Activated CD4-positive, alpha-beta T cell treated with anti-CD3 and anti-CD28 coated beads, Interleukin-2, amount 10 ng/mL, durations not matched to agents 24 days and 14 days (primary cell): ENCODE measurements at regions of chr22 and their contacts with region 1.

Region 1: GRCh38 chr22:19122143-19122751 is at the start of gene DGCR2:
- DNase-seq: peak; percentile 98
- H3K4me3 Mint-ChIP-seq: peak within 1 kb of the TSS; percentile 91
- H3K27ac Mint-ChIP-seq: peak within 1 kb of the TSS; percentile 65
- H3K4me1 Mint-ChIP-seq: peaks cover 39% of the 10 kb centered on the region
- H3K27me3 Mint-ChIP-seq: no peaks in the 10 kb centered on the region
- total RNA-seq, gene DGCR2: 23.8 and 25.5 TPM in 2 replicates

Region 2: DNA sequence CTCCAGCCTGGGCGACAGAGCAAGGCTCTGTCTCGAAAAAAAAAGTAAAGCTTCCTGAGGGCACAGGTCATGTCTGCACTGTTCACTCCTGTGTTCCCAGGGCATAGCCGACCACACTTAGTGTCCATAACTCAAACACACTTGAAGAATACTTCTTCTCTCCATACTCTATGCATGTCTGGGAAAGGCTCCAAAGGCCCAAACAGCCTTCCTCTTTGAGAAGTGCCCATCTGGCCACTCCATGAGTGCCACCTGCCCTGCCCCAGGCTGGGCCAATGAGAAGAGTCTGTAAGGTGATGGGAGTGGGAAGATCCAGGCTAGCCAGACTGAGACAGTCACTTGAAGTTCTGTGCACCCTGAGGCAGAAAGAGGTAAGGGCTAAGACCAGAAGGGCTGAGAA is 24.7 kb before region 1 on chr22:
- intact Hi-C with region 1: no loop called
- DNase-seq: no peak
- H3K4me3 Mint-ChIP-seq: no peak overlapping the region
- H3K27ac Mint-ChIP-seq: no peak overlapping the region
- H3K4me1 Mint-ChIP-seq: no peaks in the 10 kb centered on the region
- H3K27me3 Mint-ChIP-seq: no peaks in the 10 kb centered on the region

Region 3: DNA sequence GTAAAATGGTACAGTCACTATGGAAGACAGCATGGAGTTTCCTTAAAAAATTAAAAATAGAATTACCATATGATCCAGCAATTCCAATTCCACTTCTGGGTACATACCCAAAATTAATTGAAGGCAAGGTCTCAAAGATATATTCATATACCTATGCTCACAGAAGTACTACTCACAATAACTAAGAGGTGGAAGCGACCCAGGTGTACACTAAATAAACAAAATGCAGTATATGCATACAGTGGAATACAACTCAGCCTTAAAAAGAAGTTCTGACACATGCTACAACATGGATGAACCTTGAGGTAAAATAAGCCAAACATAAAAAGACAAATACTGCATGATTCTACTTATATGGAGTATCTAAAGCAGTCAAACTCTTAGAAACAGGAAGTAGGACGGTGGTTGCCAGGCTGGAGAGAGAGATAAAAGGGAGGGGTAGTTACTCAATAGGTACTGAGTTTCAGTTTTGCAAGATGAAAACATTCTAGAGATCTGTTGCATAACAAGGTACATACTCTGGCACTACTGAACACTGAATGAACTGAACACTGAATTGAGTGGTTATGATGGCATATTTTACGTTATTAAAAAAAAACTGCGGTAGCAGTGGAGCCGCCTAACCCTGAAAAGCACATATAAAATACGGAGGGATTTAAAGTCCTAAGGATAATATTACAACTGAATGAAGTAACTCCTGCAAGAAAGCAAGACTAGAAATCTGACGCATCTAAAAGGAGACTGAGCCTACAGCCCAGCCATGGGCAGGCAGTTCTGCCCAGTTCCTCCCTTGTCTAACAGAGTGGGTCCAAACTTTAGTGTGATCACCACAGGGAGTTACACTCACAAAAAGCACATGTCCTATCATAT is 12.8 kb before region 1 on chr22:
- intact Hi-C with region 1: loop called (anchors 2 kb)
- DNase-seq: peak; percentile 86
- H3K4me3 Mint-ChIP-seq: peak overlapping the region; percentile 59
- H3K27ac Mint-ChIP-seq: peak overlapping the region; percentile 23
- H3K4me1 Mint-ChIP-seq: peaks cover 45% of the 10 kb centered on the region
- H3K27me3 Mint-ChIP-seq: no peaks in the 10 kb centered on the region

Region 4: DNA sequence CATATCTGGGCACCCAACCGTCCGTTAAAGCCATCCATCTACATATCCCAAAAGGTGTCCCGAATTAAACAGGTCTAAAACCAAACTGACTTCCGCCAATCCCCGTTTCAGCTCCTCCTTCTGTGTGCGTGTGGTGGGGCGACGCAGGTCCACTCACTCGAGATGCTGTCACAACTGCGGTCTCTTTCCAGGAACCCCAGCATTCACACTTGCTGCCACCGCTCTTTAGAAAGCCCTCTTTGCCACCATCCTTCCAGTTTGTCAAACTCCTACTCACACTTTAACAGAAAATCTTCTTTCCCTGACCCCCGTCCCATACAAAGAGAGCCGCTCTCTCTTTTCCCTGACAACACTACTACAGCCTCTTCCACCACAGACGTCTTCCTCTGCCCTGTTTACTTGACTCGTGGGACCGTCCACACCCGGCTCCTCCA is 21.7 kb after region 1 on chr22:
- intact Hi-C with region 1: loop called (anchors 1 kb)
- DNase-seq: peak; percentile 85
- H3K4me3 Mint-ChIP-seq: peak overlapping the region; percentile 96
- H3K27ac Mint-ChIP-seq: peak overlapping the region; percentile 94
- H3K4me1 Mint-ChIP-seq: peaks cover 13% of the 10 kb centered on the region
- H3K27me3 Mint-ChIP-seq: peaks cover 21% of the 10 kb centered on the region

Region 5: GRCh38 chr22:19178656-19179496 is 56.6 kb after region 1 on chr22 and contains the start of gene SLC25A1:
- intact Hi-C with region 1: loop called (anchors 1 kb)
- DNase-seq: peak; percentile 97
- H3K4me3 Mint-ChIP-seq: peak within 1 kb of the TSS; percentile 83
- H3K27ac Mint-ChIP-seq: peak within 1 kb of the TSS; percentile 70
- H3K4me1 Mint-ChIP-seq: peaks cover 23% of the 10 kb centered on the region
- H3K27me3 Mint-ChIP-seq: no peaks in the 10 kb centered on the region
- total RNA-seq, gene SLC25A1: 39.4 and 41.2 TPM in 2 replicates

Region 6: GRCh38 chr22:19291580-19292457 is 169.6 kb after region 1 on chr22 and contains the start of gene CLTCL1:
- intact Hi-C with region 1: loop called (anchors 1 kb)
- DNase-seq: peak; percentile 92
- H3K4me3 Mint-ChIP-seq: peak within 1 kb of the TSS; percentile 92
- H3K27ac Mint-ChIP-seq: peak within 1 kb of the TSS; percentile 87
- H3K4me1 Mint-ChIP-seq: peaks cover 18% of the 10 kb centered on the region
- H3K27me3 Mint-ChIP-seq: peaks cover 47% of the 10 kb centered on the region
- total RNA-seq, gene CLTCL1: 0.43 and 1.3 TPM in 2 replicates

Region 7: GRCh38 chr22:19447388-19448075 is 325.3 kb after region 1 on chr22 and contains the start of gene C22orf39:
- intact Hi-C with region 1: loop called (anchors 5 kb)
- DNase-seq: peak; percentile 97
- H3K4me3 Mint-ChIP-seq: peak within 1 kb of the TSS; percentile 88
- H3K27ac Mint-ChIP-seq: peak within 1 kb of the TSS; percentile 94
- H3K4me1 Mint-ChIP-seq: peaks cover 35% of the 10 kb centered on the region
- H3K27me3 Mint-ChIP-seq: no peaks in the 10 kb centered on the region
- total RNA-seq, gene C22orf39: 25.7 and 28.5 TPM in 2 replicates

Region 8: DNA sequence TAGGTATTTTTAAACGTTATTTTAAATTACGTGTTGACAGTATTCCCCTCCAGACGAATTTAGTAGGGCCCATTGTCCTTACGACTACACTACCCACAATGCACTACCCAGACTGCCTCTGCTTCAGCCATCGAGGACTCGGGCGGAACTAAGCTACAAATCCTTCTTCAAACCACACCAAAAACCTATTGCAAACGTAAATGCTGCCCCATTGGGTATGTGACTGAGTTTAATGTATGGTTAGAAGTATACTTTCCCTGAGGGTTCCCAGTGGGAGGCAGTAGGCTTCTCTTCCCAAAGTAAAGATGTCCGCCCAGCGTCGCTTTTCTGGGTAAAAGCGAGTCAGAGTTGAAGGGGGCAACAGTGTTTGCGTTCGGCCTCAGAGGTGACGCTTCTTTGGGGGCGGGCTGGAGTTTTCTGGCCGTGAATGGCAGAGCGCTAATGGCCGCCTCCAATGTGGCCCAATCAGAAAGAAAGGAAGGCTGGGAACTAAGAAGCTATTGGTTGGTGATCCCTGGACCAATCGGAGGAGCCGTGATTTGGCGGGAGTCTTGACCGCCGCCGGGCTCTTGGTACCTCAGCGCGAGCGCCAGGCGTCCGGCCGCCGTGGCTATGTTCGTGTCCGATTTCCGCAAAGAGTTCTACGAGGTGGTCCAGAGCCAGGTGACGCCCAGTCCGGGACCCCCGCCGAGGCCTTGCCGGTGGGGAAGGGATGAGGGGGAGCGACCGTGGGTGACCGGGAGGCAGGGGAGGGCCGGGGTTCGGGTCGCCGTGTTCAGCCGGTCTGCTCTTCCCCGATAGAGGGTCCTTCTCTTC is 357.3 kb after region 1 on chr22 and contains the start of gene CDC45:
- intact Hi-C with region 1: loop called (anchors 2 kb)
- DNase-seq: peak; percentile 98
- H3K4me3 Mint-ChIP-seq: peak within 1 kb of the TSS; percentile 100
- H3K27ac Mint-ChIP-seq: peak within 1 kb of the TSS; percentile 98
- H3K4me1 Mint-ChIP-seq: peaks cover 37% of the 10 kb centered on the region
- H3K27me3 Mint-ChIP-seq: no peaks in the 10 kb centered on the region
- total RNA-seq, gene CDC45: 121 and 123 TPM in 2 replicates